Mammary epithelial cell (primary cell): ENCODE measurements at regions of chr19 and their contacts with region 1.

Region 1: DNA sequence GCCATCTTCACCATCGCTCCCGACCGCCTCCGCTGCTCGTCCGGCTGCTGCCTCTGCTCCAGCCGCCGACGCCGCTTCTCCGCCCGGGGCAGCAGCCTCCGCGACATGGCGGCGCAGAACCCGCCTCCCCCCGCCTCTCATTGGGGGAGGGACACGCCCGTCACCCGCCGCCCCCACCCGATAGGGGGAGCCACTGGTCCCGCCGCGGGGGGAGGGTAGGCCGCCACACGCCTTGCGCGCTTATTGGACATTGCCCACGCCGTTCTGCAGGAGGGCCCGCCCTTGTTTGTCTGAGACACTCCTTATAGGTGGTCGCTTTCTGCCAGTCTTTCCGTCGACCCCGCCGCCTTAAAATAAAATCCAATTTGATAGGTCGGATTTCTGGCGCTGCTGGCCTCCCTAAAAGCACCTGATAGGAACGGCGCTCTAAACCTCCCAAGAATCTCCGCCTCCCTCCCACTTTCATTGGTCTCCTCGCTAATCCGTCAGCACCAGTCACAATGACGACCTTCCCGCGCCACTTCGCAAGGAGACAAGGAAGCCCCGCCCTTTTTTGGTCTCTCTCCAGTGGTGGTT is at the start of gene HNRNPL:
- DNase-seq: peak; percentile 100
- H3K4me3 ChIP-seq: peak within 1 kb of the TSS; percentile 74 to 86 (median 75)
- H3K27ac ChIP-seq: peak within 1 kb of the TSS; percentile 89
- H3K4me1 ChIP-seq: peaks cover 31% of the 10 kb centered on the region
- H3K27me3 ChIP-seq: no peaks in the 10 kb centered on the region
- CTCF ChIP-seq: peak; percentile 4 to 62
- total RNA-seq, gene HNRNPL: 200 to 391 TPM

Region 2: DNA sequence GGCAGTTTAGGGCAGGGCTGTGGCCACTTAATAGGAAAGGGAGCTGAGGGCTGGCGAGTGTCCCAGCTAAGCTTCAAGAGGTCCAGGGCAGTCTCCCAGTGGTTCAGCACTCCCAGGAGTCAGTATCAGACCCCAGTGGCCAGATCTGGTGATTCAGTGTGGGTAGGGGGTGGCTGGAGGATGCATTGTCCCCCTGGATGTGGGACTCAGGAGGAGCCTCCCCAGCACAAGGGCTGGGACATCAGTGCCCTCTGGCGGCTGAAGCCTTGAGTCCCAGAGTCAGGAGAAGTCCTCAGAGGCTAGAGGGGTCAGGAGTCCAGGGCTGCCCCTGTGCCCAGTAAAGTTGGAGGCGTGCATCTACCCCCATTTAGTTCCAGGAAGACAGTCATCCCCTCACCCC is 465.3 kb before region 1 on chr19:
- CTCF ChIA-PET with region 1: no interaction called
- dilution Hi-C with region 1: no loop called
- in situ Hi-C with region 1: no loop called
- intact Hi-C with region 1: no loop called
- DNase-seq: peak; percentile 22
- H3K4me3 ChIP-seq: no peak overlapping the region
- H3K27ac ChIP-seq: no peak overlapping the region
- H3K4me1 ChIP-seq: peaks cover 24% of the 10 kb centered on the region
- H3K27me3 ChIP-seq: no peaks in the 10 kb centered on the region
- CTCF ChIP-seq: peak in 1 of 2 donors; percentile 14

Region 3: DNA sequence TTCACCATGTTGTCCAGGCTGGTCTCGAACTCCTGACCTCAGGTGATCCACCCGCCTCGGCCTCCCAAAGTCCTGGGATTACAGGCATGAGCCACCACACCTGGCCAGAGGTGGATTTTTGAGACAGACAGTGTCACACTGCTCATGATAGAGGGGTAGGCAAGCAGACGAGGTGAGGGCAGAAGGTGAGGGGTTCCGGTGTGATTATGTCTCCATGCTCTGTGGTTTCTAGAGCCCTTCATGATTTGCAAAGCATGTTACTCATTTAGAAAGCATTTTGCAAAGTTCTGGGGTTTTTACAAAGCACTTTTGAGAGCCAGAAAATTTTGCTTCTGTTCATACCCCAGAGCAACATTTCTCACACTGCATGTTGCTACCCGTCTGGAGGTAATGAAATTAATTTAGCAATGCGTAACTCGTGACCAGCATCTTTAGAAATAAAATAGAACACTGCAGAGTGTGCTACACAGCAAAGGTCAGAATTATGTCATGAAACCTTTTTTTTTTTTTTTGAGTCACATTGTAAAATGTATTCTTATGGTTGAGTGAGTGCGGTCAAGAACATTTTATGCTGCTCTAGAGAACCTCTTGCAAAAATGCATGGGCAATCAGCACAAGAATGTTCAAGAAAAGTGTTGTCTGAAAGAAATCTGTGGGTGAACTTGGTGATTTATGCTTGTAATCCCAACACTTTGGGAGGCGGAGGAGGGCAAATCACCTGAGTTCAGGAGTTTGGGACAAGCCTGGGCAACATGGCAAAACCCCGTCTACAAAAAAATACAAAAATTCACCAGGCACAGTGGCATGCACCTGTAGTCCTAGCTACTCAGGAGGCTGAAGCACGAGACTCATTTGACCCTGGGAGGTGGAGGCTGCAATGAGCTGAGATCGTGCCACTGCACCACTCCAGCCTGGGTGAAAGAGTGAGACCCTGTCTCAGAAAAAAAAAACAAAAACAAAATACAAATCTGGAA is 290.2 kb before region 1 on chr19:
- CTCF ChIA-PET with region 1: no interaction called
- dilution Hi-C with region 1: no loop called
- in situ Hi-C with region 1: no loop called
- intact Hi-C with region 1: loop called (anchors 1 kb)
- DNase-seq: peak; percentile 99
- H3K4me3 ChIP-seq: no peak overlapping the region
- H3K27ac ChIP-seq: peak overlapping the region; percentile 48
- H3K4me1 ChIP-seq: peaks cover 19% of the 10 kb centered on the region
- H3K27me3 ChIP-seq: peaks cover under 1% of the 10 kb centered on the region
- CTCF ChIP-seq: no peak

Region 4: DNA sequence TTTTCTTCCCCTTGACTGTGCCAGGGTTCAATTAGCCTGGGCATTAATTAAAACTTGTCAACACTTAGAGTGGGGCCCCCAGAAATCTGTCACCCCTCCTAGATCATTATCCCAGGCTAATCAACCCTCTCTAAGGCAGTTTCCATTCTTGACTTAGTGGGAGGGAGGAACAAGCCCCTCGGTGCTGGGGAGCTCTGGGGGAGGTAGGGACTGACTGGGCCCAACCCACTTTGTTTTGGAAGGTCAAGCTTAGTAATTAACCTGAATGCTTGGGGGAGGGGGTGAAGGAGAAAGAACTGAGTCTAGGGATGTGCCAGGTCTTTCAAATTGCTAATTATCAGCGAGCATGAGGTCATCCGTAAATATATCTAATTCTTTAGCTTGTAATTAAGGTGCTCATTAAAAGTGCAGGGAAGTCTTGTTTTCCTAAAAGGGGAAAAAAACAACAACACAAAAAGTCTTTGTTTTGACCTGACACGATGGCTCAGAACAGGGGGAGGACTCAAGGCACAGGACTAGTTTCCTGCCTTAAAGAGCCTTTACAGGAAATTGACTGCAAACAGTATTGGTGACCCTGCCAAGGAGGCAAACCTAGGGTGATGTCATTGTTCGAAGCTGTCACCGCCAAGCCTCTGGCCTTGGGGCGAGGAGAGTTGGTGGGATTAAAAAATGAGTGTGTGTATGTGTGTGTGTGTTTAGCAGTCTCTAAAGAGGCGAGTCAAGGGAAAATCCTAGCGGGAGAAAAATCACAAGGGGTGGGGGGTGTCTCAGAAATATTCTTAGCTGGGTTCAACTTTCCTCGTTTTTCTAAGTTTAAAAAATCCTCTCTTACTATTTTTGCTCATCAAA is 183.1 kb before region 1 on chr19:
- CTCF ChIA-PET with region 1: interaction called, 17 read pairs
- dilution Hi-C with region 1: no loop called
- in situ Hi-C with region 1: no loop called
- intact Hi-C with region 1: no loop called
- DNase-seq: peak; percentile 74
- H3K4me3 ChIP-seq: no peak overlapping the region
- H3K27ac ChIP-seq: peak overlapping the region; percentile 84
- H3K4me1 ChIP-seq: peaks cover 97% of the 10 kb centered on the region
- H3K27me3 ChIP-seq: no peaks in the 10 kb centered on the region
- CTCF ChIP-seq: no peak

Region 5: DNA sequence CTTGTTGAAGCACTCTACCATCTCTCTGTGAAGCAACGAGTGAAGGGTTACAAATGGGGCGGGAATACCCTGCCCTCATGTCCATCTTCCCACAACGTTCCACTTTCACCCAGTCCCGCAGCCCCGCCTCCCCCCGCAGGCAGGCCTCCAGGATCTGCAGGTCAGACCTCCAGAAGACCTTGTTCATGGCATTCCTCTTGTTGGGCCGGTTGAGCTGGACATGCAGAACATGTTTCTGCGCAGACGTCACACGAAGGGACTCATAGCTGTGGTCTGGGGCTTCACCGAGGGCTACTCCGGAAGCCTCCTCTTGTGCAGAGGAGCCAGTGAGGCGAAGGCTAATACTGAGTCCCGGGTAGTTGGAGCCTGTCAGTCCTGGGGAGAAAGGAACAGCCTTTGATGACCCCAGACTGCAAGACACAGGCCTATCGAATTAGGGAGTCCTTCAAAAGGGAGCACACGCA is 18.8 kb before region 1 on chr19:
- CTCF ChIA-PET with region 1: no interaction called
- dilution Hi-C with region 1: no loop called
- in situ Hi-C with region 1: no loop called
- intact Hi-C with region 1: loop called (anchors 1 kb)
- DNase-seq: peak; percentile 86
- H3K4me3 ChIP-seq: peak overlapping the region; percentile 57 to 83 (median 60)
- H3K27ac ChIP-seq: peak overlapping the region; percentile 74
- H3K4me1 ChIP-seq: peaks cover 31% of the 10 kb centered on the region
- H3K27me3 ChIP-seq: no peaks in the 10 kb centered on the region
- CTCF ChIP-seq: no peak

Region 6: GRCh38 chr19:38891771-38892170 is 41.8 kb after region 1 on chr19:
- CTCF ChIA-PET with region 1: interaction called, 3 read pairs
- dilution Hi-C with region 1: no loop called
- in situ Hi-C with region 1: no loop called
- intact Hi-C with region 1: loop called (anchors 1 kb)
- DNase-seq: no peak
- H3K4me3 ChIP-seq: no peak overlapping the region
- H3K27ac ChIP-seq: no peak overlapping the region
- H3K4me1 ChIP-seq: no peaks in the 10 kb centered on the region
- H3K27me3 ChIP-seq: no peaks in the 10 kb centered on the region
- CTCF ChIP-seq: no peak

Region 7: DNA sequence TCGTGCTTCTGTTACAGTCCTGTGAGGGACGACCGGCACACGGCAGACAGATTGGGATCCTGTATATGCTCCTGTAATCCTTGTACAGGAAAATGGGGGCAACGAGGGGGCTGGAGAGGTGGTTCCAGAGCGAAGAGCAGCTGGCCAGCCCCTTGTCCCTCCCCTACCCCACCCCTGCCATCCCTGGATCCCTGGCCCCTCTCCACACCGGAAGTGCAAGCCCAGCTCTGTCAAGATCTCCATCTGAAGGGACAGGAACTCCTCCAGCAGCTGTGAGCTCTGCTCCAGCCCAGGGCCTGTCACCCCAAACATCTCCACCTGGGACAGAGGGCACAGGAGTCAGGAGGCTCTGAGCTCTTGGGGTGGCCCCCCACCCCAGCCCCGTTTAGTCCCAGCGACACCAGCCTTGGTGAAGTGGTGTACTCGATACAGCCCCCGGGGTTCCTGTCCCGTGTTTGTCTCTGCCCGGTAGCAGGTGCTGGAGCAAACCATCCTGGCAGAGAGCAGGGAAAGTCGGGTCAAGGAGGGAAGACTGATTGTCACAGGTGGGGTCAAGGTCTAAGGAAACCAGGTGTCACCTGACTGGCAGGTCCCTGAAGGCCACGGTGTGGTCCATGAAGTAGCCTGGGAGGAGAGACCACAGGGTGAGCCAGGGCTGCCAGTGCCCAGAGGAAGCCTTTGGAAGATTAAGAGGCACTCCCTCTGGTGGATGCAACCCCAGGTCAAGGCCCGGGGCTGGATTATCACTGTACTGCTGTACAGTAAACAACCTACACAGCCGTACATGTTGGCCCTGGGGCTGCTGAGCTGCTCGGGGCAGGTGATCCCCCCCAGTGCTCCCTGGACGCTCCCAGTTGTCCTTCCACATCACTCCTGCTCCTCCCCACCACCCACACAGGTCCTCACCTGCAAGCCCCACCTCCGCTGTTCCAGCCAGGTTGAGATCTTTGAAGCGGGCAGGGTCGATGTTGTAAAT is 67.9 kb after region 1 on chr19:
- CTCF ChIA-PET with region 1: no interaction called
- dilution Hi-C with region 1: no loop called
- in situ Hi-C with region 1: no loop called
- intact Hi-C with region 1: no loop called
- DNase-seq: no peak
- H3K4me3 ChIP-seq: no peak overlapping the region
- H3K27ac ChIP-seq: no peak overlapping the region
- H3K4me1 ChIP-seq: no peaks in the 10 kb centered on the region
- H3K27me3 ChIP-seq: no peaks in the 10 kb centered on the region
- CTCF ChIP-seq: peak in 1 of 2 donors; percentile 27

Region 8: DNA sequence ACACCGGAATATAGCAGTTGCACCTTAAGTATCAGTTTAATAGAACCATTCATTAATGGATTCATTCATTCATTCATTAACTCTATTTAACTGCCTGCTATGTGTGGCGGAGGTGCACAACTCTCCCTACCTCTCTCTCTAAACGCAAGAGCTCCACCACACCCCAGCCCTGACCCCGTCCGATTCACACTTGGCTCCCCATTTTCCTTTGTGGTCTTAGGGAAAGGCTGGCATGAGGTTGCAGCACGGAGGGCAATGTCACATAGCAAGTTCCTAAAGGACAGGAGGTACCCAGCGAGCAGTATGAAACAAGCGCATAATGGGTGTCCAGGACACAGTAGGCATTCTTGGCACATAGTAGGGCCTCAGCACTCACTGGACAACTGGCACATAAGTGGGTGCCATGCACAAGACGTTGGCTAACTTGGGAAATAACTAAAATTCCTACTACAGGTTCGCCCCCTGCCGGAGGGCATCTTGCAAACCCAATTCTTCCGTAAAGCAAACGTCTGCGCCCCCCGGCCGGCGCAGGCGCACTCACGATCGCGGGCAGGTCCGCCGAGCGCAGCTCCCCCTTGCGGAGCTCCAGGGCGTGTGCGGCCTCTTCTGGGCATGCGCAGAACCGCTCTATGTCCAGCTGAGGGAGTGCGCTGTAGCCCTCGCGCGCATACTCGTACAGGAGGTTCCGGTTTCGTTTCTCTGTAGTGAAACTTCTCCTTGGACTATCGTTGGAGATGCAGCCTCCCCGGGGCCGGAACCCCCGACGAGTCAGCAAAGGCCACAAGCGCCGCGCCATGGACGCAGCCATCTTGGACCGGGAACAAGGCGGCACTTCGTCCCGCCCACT is 80.2 kb after region 1 on chr19 and contains the start of gene SARS2:
- CTCF ChIA-PET with region 1: interaction called, 5 read pairs
- dilution Hi-C with region 1: no loop called
- in situ Hi-C with region 1: no loop called
- intact Hi-C with region 1: loop called (anchors 1 kb)
- DNase-seq: peak; percentile 84
- H3K4me3 ChIP-seq: peak within 1 kb of the TSS; percentile 84 to 90 (median 86)
- H3K27ac ChIP-seq: peak within 1 kb of the TSS; percentile 82
- H3K4me1 ChIP-seq: peaks cover 12% of the 10 kb centered on the region
- H3K27me3 ChIP-seq: no peaks in the 10 kb centered on the region
- CTCF ChIP-seq: peak; percentile 88 to 96
- total RNA-seq, gene SARS2: 18.0 to 28.0 TPM